ENCODE measurements at regions of chr11 and their contacts with region 1.

Region 1: GRCh38 chr11:14713496-14714244 is 70.1 kb downstream of the PDE3B start:
- DNase-seq: peak in 7 of 9 donors; percentile 56 to 82 (median 74)
- ATAC-seq: peak; percentile 91
- H3K4me3 ChIP-seq: peak overlapping the region; percentile 22
- H3K4me3 Mint-ChIP-seq: peak overlapping the region; percentile 60 to 85 (median 70)
- H3K27ac ChIP-seq: peak overlapping the region; percentile 1
- H3K27ac Mint-ChIP-seq: peak overlapping the region; percentile 10 to 95 (median 83)
- H3K4me1 ChIP-seq: peaks cover 16 to 20% of the 10 kb centered on the region in 2 donors
- H3K4me1 Mint-ChIP-seq: peaks cover 19 to 60% (median 48%) of the 10 kb centered on the region in 7 donors
- H3K27me3 ChIP-seq: no peaks in the 10 kb centered on the region
- H3K27me3 Mint-ChIP-seq: no peaks in the 10 kb centered on the region

Region 2: GRCh38 chr11:14636119-14636518 is 77.6 kb before region 1 on chr11:
- CTCF ChIA-PET with region 1: no interaction called
- POLR2A ChIA-PET with region 1: no interaction called
- intact Hi-C with region 1: no loop called
- DNase-seq: peak in 3 of 9 donors; percentile 14 to 45 (median 41)
- ATAC-seq: peak; percentile 56
- H3K4me3 ChIP-seq: no peak overlapping the region
- H3K4me3 Mint-ChIP-seq: peak overlapping the region; percentile 6 to 65 (median 51)
- H3K27ac ChIP-seq: no peak overlapping the region
- H3K27ac Mint-ChIP-seq: peak overlapping the region; percentile 26 to 93 (median 77)
- H3K4me1 ChIP-seq: peaks cover 39 to 57% of the 10 kb centered on the region in 2 donors
- H3K4me1 Mint-ChIP-seq: peaks cover 39 to 77% (median 66%) of the 10 kb centered on the region in 7 donors
- H3K27me3 ChIP-seq: no peaks in the 10 kb centered on the region
- H3K27me3 Mint-ChIP-seq: no peaks in the 10 kb centered on the region

Region 3: DNA sequence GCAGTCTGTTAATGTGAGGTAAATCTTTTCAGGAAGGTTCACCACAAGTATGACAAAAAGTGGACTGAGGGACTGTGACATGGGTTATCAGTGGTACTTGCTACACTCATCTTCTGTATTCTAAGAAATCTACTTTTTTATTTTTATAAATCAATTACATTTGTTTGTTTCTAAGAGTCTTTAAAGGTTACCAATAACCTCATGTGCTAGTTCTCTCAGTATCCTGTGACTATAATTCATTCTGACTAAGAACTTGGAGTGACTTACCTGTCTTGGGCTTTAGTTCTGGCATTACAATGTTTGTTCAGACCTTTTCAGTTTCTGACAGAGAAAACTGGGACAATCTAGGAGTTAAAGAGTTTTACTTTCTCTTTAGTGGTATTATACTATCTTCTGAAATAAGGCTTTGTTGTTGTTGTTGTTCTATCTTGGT is 38.3 kb after region 1 on chr11:
- CTCF ChIA-PET with region 1: no interaction called
- POLR2A ChIA-PET with region 1: no interaction called
- intact Hi-C with region 1: loop called in 1 of 2 experiments (anchors 5 kb)
- DNase-seq: no peak
- ATAC-seq: peak; percentile 56
- H3K4me3 ChIP-seq: no peak overlapping the region
- H3K4me3 Mint-ChIP-seq: peak overlapping the region in 9 of 10 donors; percentile 11 to 76 (median 58)
- H3K27ac ChIP-seq: peak overlapping the region; percentile 52
- H3K27ac Mint-ChIP-seq: peak overlapping the region; percentile 24 to 90 (median 67)
- H3K4me1 ChIP-seq: peaks cover 0 to 33% of the 10 kb centered on the region in 2 donors
- H3K4me1 Mint-ChIP-seq: peaks cover 26 to 82% (median 66%) of the 10 kb centered on the region in 7 donors
- H3K27me3 ChIP-seq: no peaks in the 10 kb centered on the region
- H3K27me3 Mint-ChIP-seq: no peaks in the 10 kb centered on the region

Measured in naive thymus-derived CD4-positive, alpha-beta T cell (primary cell).